ENCODE measurements at regions of chr19 and their contacts with region 1.

Region 1: DNA sequence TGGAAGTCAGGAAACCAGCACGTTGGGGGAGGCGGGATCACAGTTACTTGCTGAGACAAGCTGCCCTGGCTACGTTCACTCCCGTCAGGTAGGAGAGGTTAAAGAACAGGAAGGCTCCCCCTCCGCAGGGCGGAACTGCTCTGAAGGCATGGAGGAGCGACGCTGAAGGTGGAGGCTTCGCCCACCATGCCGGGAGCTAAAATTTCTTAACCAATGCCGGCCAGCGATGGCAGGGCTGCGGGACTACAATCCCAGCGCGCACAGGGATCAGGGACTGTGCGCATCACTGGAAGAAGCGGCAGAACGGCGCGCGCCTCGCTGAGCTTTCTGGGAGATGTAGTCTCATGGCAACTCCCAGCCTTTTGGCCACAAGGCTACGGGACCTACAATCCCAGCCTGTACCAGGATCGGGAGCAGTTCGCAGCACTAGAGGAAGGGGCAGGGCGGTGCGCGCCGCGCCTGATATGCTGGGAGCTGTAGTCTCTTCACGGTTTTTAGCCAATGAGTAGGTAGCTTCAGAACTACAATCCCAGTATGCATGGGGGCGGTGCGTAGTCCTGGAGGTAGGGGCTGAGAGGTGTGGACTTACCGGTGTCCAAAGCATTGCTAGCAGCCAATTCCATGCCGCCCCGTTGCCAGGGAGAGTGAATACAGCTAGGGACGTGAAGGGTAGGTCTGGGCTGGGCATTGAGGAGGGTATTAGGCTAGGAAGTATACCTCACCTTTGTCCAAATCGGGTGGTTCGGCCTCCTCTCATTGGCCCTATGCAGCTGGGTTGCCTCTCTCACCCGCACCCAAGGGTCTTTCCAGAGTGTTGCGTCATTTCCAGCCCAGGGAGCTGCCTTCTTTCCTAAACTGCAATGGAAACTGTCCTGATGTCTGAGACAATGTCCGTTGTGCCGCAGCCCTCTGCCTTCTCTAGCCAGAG is 12.8 kb upstream of the ZNF682 start:
- DNase-seq: peak; percentile 99
- H3K4me3 ChIP-seq: peak overlapping the region in 2 of 3 experiments; percentile 0 to 26
- H3K27ac ChIP-seq: no peak overlapping the region
- H3K4me1 ChIP-seq: no peaks in the 10 kb centered on the region
- H3K27me3 ChIP-seq: no peaks in the 10 kb centered on the region
- CTCF ChIP-seq: no peak

Region 2: GRCh38 chr19:19900729-19901444 is 151.2 kb before region 1 on chr19 and contains the start of gene ZNF93:
- CTCF ChIA-PET with region 1: no interaction called
- dilution Hi-C with region 1: no loop called
- in situ Hi-C with region 1: no loop called
- intact Hi-C with region 1: loop called (anchors 10 kb)
- DNase-seq: peak; percentile 95
- H3K4me3 ChIP-seq: peak within 1 kb of the TSS; percentile 41 to 50 (median 43)
- H3K27ac ChIP-seq: no peak within 1 kb of the TSS
- H3K4me1 ChIP-seq: no peaks in the 10 kb centered on the region
- H3K27me3 ChIP-seq: no peaks in the 10 kb centered on the region
- CTCF ChIP-seq: no peak
- total RNA-seq, gene ZNF93: 6.4 to 16.8 TPM

Region 3: GRCh38 chr19:19937403-19937802 is 114.7 kb before region 1 on chr19:
- CTCF ChIA-PET with region 1: no interaction called
- dilution Hi-C with region 1: no loop called
- in situ Hi-C with region 1: no loop called
- intact Hi-C with region 1: no loop called
- DNase-seq: no peak
- H3K4me3 ChIP-seq: no peak overlapping the region
- H3K27ac ChIP-seq: no peak overlapping the region
- H3K4me1 ChIP-seq: no peaks in the 10 kb centered on the region
- H3K27me3 ChIP-seq: no peaks in the 10 kb centered on the region
- CTCF ChIP-seq: no peak

Region 4: DNA sequence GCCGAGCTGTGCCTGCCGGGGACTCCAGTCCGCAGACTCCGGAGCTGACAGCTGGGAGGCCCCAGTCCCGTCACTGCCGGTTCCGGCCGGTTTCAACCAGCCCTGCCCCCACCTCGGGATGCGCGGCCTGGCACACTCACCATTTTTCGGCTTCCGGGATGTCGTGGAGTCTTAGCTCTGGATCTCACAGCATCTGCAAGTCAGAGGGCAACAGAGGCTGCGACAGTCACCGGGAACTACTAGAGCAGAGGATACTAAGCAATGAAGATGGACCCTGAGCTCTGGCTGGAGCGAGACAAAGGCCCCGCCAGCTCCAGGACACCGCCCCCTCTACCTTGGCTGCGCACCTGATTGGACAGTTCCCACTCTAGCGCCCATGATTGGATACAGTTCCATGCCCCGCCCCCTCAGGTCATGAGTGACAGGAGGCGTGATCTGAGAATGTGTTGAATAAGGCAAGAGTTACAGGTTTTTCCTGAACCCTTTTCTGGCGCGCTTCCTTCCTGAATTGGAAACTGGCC is 12.8 kb before region 1 on chr19 and contains the start of gene ZNF682:
- CTCF ChIA-PET with region 1: no interaction called
- dilution Hi-C with region 1: no loop called
- in situ Hi-C with region 1: no loop called
- intact Hi-C with region 1: loop called (anchors 1 kb)
- DNase-seq: peak; percentile 93
- H3K4me3 ChIP-seq: peak within 1 kb of the TSS in 1 of 3 experiments; percentile 33
- H3K27ac ChIP-seq: no peak within 1 kb of the TSS
- H3K4me1 ChIP-seq: no peaks in the 10 kb centered on the region
- H3K27me3 ChIP-seq: no peaks in the 10 kb centered on the region
- CTCF ChIP-seq: no peak
- total RNA-seq, gene ZNF682: 2.2 to 6.8 TPM

Region 5: GRCh38 chr19:20077791-20078463 is 25.8 kb after region 1 on chr19 and contains the start of gene ZNF90:
- CTCF ChIA-PET with region 1: no interaction called
- dilution Hi-C with region 1: no loop called
- in situ Hi-C with region 1: no loop called
- intact Hi-C with region 1: loop called (anchors 1 kb)
- DNase-seq: peak; percentile 96
- H3K4me3 ChIP-seq: peak within 1 kb of the TSS in 1 of 3 experiments; percentile 22
- H3K27ac ChIP-seq: no peak within 1 kb of the TSS
- H3K4me1 ChIP-seq: no peaks in the 10 kb centered on the region
- H3K27me3 ChIP-seq: no peaks in the 10 kb centered on the region
- CTCF ChIP-seq: no peak
- total RNA-seq, gene ZNF90: 2.2 to 8.7 TPM

Region 6: DNA sequence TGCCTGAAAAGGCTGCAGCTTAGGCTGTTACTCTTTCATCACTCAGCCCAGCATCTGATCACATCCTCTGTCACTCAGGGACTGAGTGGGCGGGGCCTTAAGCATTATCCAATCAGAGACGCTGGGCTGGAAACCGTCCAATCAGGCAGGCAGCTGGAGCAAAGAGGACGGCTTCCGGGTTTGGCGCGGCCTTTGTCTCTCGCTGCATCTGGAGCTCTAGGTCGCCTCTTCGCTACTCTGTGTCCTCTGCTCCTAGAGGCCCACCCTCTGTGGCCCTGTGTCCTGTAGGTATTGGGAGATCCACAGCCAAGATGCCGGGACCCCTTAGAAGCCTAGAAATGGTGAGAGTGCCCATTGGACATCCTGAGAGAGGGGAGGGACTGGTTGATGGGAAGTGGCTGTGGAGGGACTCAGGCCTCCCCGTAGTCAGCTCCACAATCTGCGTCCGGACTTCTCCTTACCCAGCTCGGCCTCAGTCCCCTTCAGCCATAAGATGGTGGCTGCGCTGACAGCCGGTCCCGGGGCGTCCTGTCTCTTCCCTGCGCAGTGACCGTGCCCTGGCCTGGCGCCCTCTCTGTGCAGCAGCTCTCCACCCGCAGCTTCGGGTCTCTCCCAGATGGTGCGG is 115.0 kb after region 1 on chr19 and contains the start of gene ZNF486:
- CTCF ChIA-PET with region 1: no interaction called
- dilution Hi-C with region 1: no loop called
- in situ Hi-C with region 1: no loop called
- intact Hi-C with region 1: loop called (anchors 5 kb)
- DNase-seq: peak; percentile 94
- H3K4me3 ChIP-seq: peak within 1 kb of the TSS; percentile 37 to 61 (median 50)
- H3K27ac ChIP-seq: peak within 1 kb of the TSS; percentile 38
- H3K4me1 ChIP-seq: no peaks in the 10 kb centered on the region
- H3K27me3 ChIP-seq: no peaks in the 10 kb centered on the region
- CTCF ChIP-seq: no peak
- total RNA-seq, gene ZNF486: 7.8 to 8.8 TPM

Region 7: DNA sequence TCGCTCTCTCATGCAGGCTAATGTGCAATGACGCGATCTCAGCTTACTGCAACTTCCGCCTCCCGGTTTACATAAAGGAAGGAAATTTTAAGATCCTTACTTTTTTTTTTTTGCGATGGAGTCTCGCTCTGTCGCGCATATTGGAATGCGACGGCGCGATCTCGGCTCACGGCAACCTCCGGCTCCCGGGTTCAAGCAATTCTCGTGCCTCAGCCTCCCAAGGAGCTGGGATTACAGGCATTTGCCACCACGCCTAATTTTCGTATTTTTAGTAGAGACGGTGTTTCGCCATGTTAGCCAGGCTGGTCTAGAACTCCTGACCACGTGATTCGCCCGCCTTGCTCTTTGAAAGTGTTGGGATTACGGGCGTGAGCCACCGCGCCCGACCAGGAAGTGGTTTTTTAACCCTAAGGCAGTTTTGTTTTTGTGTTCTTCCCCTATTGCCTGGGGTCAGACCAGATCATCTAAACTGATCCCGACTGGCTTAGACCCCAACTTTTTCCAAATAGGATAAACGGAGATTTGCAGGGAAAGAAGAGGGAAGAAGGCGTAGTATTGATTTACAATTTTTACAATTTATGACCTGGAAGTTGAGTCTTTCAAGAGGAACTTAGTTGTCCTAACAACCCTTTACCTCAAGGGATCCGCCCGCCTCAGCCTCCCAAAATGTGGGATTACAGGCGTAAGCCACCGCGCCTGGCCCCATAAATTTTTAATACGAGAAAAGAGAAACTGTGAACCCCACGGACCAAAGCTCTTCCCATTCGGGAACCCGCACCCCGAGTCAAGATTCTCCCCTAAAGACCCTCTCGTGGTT is 371.5 kb after region 1 on chr19:
- CTCF ChIA-PET with region 1: interaction called, 3 read pairs
- dilution Hi-C with region 1: no loop called
- in situ Hi-C with region 1: no loop called
- intact Hi-C with region 1: loop called (anchors 5 kb)
- DNase-seq: peak; percentile 56
- H3K4me3 ChIP-seq: peak overlapping the region; percentile 43 to 58 (median 52)
- H3K27ac ChIP-seq: peak overlapping the region; percentile 22
- H3K4me1 ChIP-seq: no peaks in the 10 kb centered on the region
- H3K27me3 ChIP-seq: no peaks in the 10 kb centered on the region
- CTCF ChIP-seq: no peak

Measured in mammary epithelial cell (primary cell).